CD4-positive, alpha-beta T cell (primary cell): ENCODE measurements at regions of chr12 and their contacts with region 1.

Region 1: DNA sequence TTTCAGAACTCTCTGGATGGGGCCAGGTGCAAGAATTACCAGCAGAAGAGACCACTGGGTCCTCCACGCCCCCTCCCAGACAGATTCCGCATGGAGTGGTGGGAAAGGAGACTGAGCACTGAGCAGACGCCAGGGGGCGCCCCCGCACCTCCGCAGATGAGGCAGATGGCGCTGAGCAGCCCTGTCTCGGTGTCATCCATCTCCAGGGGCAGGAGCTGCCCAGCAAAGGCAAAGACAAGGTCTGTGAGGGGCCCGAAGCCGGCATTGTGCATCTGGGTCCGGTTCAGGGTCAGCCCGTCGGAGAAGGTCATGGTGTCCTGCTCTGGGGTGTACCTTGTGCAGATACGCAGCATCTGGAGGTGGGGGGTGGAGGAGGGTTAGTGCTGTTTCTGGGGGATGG is 6.3 kb upstream of the ITGB7 start:
- DNase-seq: peak; percentile 76 to 92 (median 82)
- ATAC-seq: peak; percentile 75
- H3K4me3 ChIP-seq: no peak overlapping the region
- H3K4me3 Mint-ChIP-seq: peak overlapping the region; percentile 61
- H3K27ac ChIP-seq: no peak overlapping the region
- H3K27ac Mint-ChIP-seq: peak overlapping the region; percentile 64
- H3K4me1 ChIP-seq: peaks cover 81% of the 10 kb centered on the region
- H3K4me1 Mint-ChIP-seq: peaks cover 68% of the 10 kb centered on the region
- H3K27me3 ChIP-seq: no peaks in the 10 kb centered on the region
- H3K27me3 Mint-ChIP-seq: no peaks in the 10 kb centered on the region
- CTCF ChIP-seq: peak; percentile 93

Region 2: GRCh38 chr12:53200458-53201176 is 12.7 kb before region 1 on chr12:
- CTCF ChIA-PET with region 1: interaction called, 12 read pairs
- POLR2A ChIA-PET with region 1: interaction called, 45 read pairs
- intact Hi-C with region 1: no loop called
- DNase-seq: peak in 4 of 14 experiments; percentile 40 to 53 (median 47)
- ATAC-seq: peak; percentile 53
- H3K4me3 ChIP-seq: peak overlapping the region; percentile 19
- H3K4me3 Mint-ChIP-seq: peak overlapping the region; percentile 86
- H3K27ac ChIP-seq: peak overlapping the region; percentile 31 to 63
- H3K27ac Mint-ChIP-seq: peak overlapping the region; percentile 88
- H3K4me1 ChIP-seq: peaks cover 89% of the 10 kb centered on the region
- H3K4me1 Mint-ChIP-seq: peaks cover 81% of the 10 kb centered on the region
- H3K27me3 ChIP-seq: no peaks in the 10 kb centered on the region
- H3K27me3 Mint-ChIP-seq: no peaks in the 10 kb centered on the region
- CTCF ChIP-seq: no peak

Region 3: GRCh38 chr12:53231826-53232645 is 18.7 kb after region 1 on chr12 and contains the start of gene RARG:
- CTCF ChIA-PET with region 1: interaction called, 14 read pairs
- POLR2A ChIA-PET with region 1: interaction called, 43 read pairs
- intact Hi-C with region 1: loop called in 1 of 2 experiments (anchors 2 kb)
- DNase-seq: peak in 12 of 14 experiments; percentile 47 to 86 (median 66)
- ATAC-seq: peak; percentile 66
- H3K4me3 ChIP-seq: peak within 1 kb of the TSS; percentile 55
- H3K4me3 Mint-ChIP-seq: peak within 1 kb of the TSS; percentile 91
- H3K27ac ChIP-seq: peak within 1 kb of the TSS; percentile 55 to 86
- H3K27ac Mint-ChIP-seq: peak within 1 kb of the TSS; percentile 81
- H3K4me1 ChIP-seq: peaks cover 93% of the 10 kb centered on the region
- H3K4me1 Mint-ChIP-seq: peaks cover 72% of the 10 kb centered on the region
- H3K27me3 ChIP-seq: no peaks in the 10 kb centered on the region
- H3K27me3 Mint-ChIP-seq: no peaks in the 10 kb centered on the region
- CTCF ChIP-seq: no peak
- total RNA-seq, gene RARG: 14.0 to 15.8 TPM

Region 4: DNA sequence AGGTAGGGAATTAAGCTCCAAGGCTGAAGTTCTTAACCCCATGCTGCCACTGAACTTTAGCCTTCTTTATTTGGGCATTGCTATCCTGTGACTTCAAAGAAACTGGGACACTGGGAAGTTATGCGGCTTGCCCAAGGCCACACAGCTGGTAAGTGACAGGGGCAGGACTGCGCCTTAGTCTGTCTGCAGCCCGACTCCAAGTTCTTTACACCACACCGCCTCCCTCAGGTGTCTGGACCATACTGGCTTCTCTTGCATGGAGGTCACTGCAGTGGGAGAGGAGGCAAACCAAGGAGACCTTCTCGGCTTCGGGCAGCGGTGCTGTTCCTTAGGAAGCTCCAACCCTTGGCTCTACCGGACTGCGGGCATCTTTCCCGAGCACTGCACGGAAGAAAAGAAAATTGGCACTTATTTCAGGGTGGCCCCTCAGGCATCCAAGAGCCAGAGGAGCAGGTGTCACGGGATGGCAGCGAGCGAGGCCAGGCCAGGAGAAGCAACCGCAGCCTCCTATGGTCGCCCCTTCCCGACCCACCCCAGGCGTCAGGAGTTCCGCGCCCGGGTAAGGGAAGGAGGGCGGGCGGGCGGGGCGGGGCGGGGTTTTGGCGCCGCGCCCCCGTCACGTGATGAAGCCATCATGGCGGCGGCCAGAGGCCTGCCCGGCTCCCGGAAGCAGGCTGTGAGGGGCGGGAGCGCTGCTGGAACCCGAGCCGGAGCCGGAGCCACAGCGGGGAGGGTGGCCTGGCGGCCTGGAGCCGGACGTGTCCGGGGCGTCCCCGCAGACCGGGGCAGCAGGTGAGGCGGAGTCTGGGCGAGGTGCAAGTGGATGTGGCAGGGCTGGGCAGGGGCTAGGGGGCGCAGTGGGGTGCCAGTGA is 38.4 kb after region 1 on chr12:
- CTCF ChIA-PET with region 1: interaction called, 68 read pairs
- POLR2A ChIA-PET with region 1: interaction called, 23 read pairs
- intact Hi-C with region 1: loop called (anchors 1 kb)
- DNase-seq: peak; percentile 43 to 87 (median 65)
- ATAC-seq: peak; percentile 86
- H3K4me3 ChIP-seq: peak overlapping the region; percentile 89
- H3K4me3 Mint-ChIP-seq: peak overlapping the region; percentile 99
- H3K27ac ChIP-seq: peak overlapping the region; percentile 50 to 74
- H3K27ac Mint-ChIP-seq: peak overlapping the region; percentile 93
- H3K4me1 ChIP-seq: peaks cover 51% of the 10 kb centered on the region
- H3K4me1 Mint-ChIP-seq: peaks cover 52% of the 10 kb centered on the region
- H3K27me3 ChIP-seq: no peaks in the 10 kb centered on the region
- H3K27me3 Mint-ChIP-seq: no peaks in the 10 kb centered on the region
- CTCF ChIP-seq: peak; percentile 57

Region 5: GRCh38 chr12:53267999-53268647 is 54.8 kb after region 1 on chr12 and contains the start of gene ESPL1:
- CTCF ChIA-PET with region 1: interaction called, 37 read pairs
- POLR2A ChIA-PET with region 1: interaction called, 28 read pairs
- intact Hi-C with region 1: loop called in 1 of 2 experiments (anchors 5 kb)
- DNase-seq: peak; percentile 55 to 93 (median 74)
- ATAC-seq: peak; percentile 91
- H3K4me3 ChIP-seq: peak within 1 kb of the TSS; percentile 86
- H3K4me3 Mint-ChIP-seq: peak within 1 kb of the TSS; percentile 95
- H3K27ac ChIP-seq: peak within 1 kb of the TSS; percentile 40 to 50
- H3K27ac Mint-ChIP-seq: peak within 1 kb of the TSS; percentile 82
- H3K4me1 ChIP-seq: peaks cover 18% of the 10 kb centered on the region
- H3K4me1 Mint-ChIP-seq: peaks cover 19% of the 10 kb centered on the region
- H3K27me3 ChIP-seq: no peaks in the 10 kb centered on the region
- H3K27me3 Mint-ChIP-seq: no peaks in the 10 kb centered on the region
- CTCF ChIP-seq: peak; percentile 36
- total RNA-seq, gene ESPL1: 0.20 to 0.71 TPM

Region 6: GRCh38 chr12:53287741-53288216 is 74.4 kb after region 1 on chr12:
- CTCF ChIA-PET with region 1: interaction called, 15 read pairs
- POLR2A ChIA-PET with region 1: interaction called, 4 read pairs
- intact Hi-C with region 1: loop called (anchors 1 kb)
- DNase-seq: peak; percentile 60 to 88 (median 70)
- ATAC-seq: peak; percentile 98
- H3K4me3 ChIP-seq: no peak overlapping the region
- H3K4me3 Mint-ChIP-seq: no peak overlapping the region
- H3K27ac ChIP-seq: no peak overlapping the region
- H3K27ac Mint-ChIP-seq: peak overlapping the region; percentile 0
- H3K4me1 ChIP-seq: peaks cover 6% of the 10 kb centered on the region
- H3K4me1 Mint-ChIP-seq: peaks cover 5% of the 10 kb centered on the region
- H3K27me3 ChIP-seq: no peaks in the 10 kb centered on the region
- H3K27me3 Mint-ChIP-seq: no peaks in the 10 kb centered on the region
- CTCF ChIP-seq: peak; percentile 81

Region 7: DNA sequence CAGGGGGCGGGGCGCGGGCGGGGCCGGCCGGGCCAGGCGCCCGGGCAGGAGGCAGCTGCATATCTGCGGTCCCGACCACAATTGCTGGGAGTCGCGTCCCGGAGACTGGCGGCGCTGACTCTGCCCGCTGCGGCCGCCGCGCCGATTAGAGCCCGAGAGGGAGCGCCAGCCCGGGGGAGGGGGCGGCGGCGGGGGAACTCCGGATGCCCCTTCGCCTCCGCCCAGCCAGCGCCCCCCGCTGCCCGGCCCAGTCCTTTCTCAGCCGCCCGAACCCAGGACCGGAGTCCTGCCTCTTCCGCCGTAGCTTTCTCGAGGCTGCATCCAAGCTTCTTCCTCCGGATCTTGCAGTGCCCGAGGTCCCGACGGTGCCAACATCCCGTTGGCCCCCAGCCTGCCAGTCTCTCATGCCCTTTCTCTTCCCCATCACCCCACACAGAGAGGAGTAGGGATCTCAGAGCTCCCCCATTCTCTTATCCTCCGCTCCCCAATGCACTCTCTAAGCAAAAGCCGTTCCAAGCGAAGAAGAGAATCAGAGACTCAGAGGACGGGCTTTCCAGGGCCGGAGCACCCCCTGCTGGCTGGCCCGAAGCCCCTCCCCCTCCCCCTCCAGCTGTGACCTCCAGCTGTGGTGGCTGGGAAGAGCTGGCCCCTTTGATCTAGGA is 131.6 kb after region 1 on chr12:
- CTCF ChIA-PET with region 1: interaction called, 6 read pairs
- POLR2A ChIA-PET with region 1: interaction called, 5 read pairs
- intact Hi-C with region 1: loop called (anchors 2 to 5 kb)
- DNase-seq: peak; percentile 51 to 85 (median 65)
- ATAC-seq: peak; percentile 80
- H3K4me3 ChIP-seq: peak overlapping the region; percentile 66
- H3K4me3 Mint-ChIP-seq: peak overlapping the region; percentile 93
- H3K27ac ChIP-seq: no peak overlapping the region
- H3K27ac Mint-ChIP-seq: peak overlapping the region; percentile 72
- H3K4me1 ChIP-seq: peaks cover 15% of the 10 kb centered on the region
- H3K4me1 Mint-ChIP-seq: peaks cover 21% of the 10 kb centered on the region
- H3K27me3 ChIP-seq: peaks cover 2 to 3% of the 10 kb centered on the region in 2 experiments
- H3K27me3 Mint-ChIP-seq: peaks cover 3% of the 10 kb centered on the region
- CTCF ChIP-seq: peak; percentile 81

Region 8: GRCh38 chr12:53613821-53614220 is 400.5 kb after region 1 on chr12:
- CTCF ChIA-PET with region 1: no interaction called
- POLR2A ChIA-PET with region 1: no interaction called
- intact Hi-C with region 1: no loop called
- DNase-seq: no peak
- ATAC-seq: no peak
- H3K4me3 ChIP-seq: no peak overlapping the region
- H3K4me3 Mint-ChIP-seq: no peak overlapping the region
- H3K27ac ChIP-seq: no peak overlapping the region
- H3K27ac Mint-ChIP-seq: no peak overlapping the region
- H3K4me1 ChIP-seq: peaks cover 7% of the 10 kb centered on the region
- H3K4me1 Mint-ChIP-seq: peaks cover 17% of the 10 kb centered on the region
- H3K27me3 ChIP-seq: no peaks in the 10 kb centered on the region
- H3K27me3 Mint-ChIP-seq: no peaks in the 10 kb centered on the region
- CTCF ChIP-seq: no peak